OCI-LY7 (cell line): ENCODE measurements at regions of chr5 and their contacts with region 1.

Region 1: GRCh38 chr5:81675846-81676245 is 75.1 kb downstream of the SSBP2 start:
- DNase-seq: no peak
- H3K4me3 ChIP-seq: no peak overlapping the region
- H3K27ac ChIP-seq: no peak overlapping the region
- H3K4me1 ChIP-seq: peaks cover under 1% of the 10 kb centered on the region
- CTCF ChIP-seq: no peak

Region 2: DNA sequence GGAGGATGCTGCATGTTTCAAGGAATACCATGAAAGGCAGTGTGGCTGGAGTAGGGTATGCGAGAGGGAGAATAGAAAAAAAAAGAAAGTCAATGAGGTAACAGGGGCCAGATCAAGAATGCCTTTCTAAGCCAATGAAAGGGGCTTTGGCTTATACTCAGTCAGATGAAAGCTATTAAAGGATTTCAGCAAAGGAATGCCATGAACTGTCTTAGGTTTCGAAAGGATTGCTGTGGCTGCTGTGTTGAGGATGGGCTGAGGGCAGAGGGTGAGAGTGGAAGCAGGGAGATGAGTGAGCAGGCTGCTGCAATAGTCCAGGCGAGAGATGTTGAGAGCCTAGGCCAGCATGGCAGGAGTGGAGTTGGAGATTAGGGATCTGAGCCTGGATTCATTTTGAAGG is 578.1 kb before region 1 on chr5:
- CTCF ChIA-PET with region 1: no interaction called
- POLR2A ChIA-PET with region 1: no interaction called
- intact Hi-C with region 1: no loop called
- DNase-seq: no peak
- H3K4me3 ChIP-seq: no peak overlapping the region
- H3K27ac ChIP-seq: no peak overlapping the region
- H3K4me1 ChIP-seq: no peaks in the 10 kb centered on the region
- CTCF ChIP-seq: no peak

Region 3: DNA sequence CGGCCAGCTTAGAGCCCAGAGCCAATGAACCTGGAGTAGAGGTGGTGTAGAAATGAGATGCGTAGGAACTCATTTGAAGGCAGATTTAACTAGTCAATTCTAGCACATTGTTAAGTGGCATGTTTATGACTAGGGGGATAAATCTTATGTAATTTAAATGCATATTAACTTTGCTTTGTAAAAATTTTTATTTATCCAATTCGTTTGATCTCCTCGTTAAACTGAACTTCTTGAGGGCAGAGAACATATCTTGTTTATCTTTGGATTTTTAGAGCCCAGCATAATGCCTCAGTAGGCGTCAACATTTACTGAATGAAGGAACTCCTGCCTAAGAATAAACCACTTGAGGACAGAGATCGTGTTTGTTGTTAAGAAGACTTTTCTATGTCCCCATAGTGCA is 240.8 kb before region 1 on chr5:
- CTCF ChIA-PET with region 1: no interaction called
- POLR2A ChIA-PET with region 1: interaction called, 10 read pairs
- intact Hi-C with region 1: no loop called
- DNase-seq: no peak
- H3K4me3 ChIP-seq: no peak overlapping the region
- H3K27ac ChIP-seq: no peak overlapping the region
- H3K4me1 ChIP-seq: no peaks in the 10 kb centered on the region
- CTCF ChIP-seq: no peak

Region 4: GRCh38 chr5:81631124-81631523 is 44.7 kb before region 1 on chr5:
- CTCF ChIA-PET with region 1: no interaction called
- POLR2A ChIA-PET with region 1: interaction called, 11 read pairs
- intact Hi-C with region 1: no loop called
- DNase-seq: peak; percentile 84
- H3K4me3 ChIP-seq: peak overlapping the region; percentile 24
- H3K27ac ChIP-seq: peak overlapping the region; percentile 77
- H3K4me1 ChIP-seq: peaks cover 60% of the 10 kb centered on the region
- CTCF ChIP-seq: no peak